ENCODE measurements at regions of chr19 and their contacts with region 1.

Region 1: GRCh38 chr19:9597027-9597426 is 12.7 kb upstream of the ZNF121 start:
- DNase-seq: no peak
- H3K4me3 Mint-ChIP-seq: no peak overlapping the region
- H3K27ac Mint-ChIP-seq: peak overlapping the region; percentile 63
- H3K4me1 Mint-ChIP-seq: peaks cover 3% of the 10 kb centered on the region
- H3K27me3 Mint-ChIP-seq: peaks cover 4% of the 10 kb centered on the region

Region 2: DNA sequence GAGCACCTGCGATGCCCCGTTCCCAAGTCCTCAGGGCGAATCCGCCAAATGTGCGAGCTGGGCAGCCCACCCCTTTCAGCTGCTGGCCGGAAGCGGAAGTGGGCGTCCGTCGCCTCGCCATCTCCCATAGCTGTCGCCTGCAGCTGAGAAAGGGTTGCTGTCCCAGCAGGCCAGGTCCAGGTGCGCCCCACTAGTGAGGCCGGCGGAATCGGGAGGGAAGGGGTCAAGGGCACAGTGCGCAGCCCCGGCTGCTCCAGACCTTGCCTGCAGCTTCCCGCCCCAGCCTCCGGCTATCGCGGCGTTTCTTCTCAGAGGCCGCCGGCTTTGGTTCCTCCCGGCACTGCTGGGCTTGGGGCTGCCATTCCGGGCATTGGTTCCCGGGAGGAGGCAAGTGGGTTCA is 234.1 kb before region 1 on chr19 and contains the start of gene ZNF177:
- CTCF ChIA-PET with region 1: no interaction called
- intact Hi-C with region 1: no loop called
- DNase-seq: peak; percentile 6
- H3K4me3 Mint-ChIP-seq: no peak within 1 kb of the TSS
- H3K27ac Mint-ChIP-seq: peak within 1 kb of the TSS; percentile 2
- H3K4me1 Mint-ChIP-seq: no peaks in the 10 kb centered on the region
- H3K27me3 Mint-ChIP-seq: peaks cover 10% of the 10 kb centered on the region
- total RNA-seq, gene ZNF177: 0.64 to 0.91 TPM

Region 3: GRCh38 chr19:9528757-9529336 is 68.2 kb before region 1 on chr19:
- CTCF ChIA-PET with region 1: no interaction called
- intact Hi-C with region 1: no loop called
- DNase-seq: no peak
- H3K4me3 Mint-ChIP-seq: no peak overlapping the region
- H3K27ac Mint-ChIP-seq: no peak overlapping the region
- H3K4me1 Mint-ChIP-seq: no peaks in the 10 kb centered on the region
- H3K27me3 Mint-ChIP-seq: no peaks in the 10 kb centered on the region

Region 4: DNA sequence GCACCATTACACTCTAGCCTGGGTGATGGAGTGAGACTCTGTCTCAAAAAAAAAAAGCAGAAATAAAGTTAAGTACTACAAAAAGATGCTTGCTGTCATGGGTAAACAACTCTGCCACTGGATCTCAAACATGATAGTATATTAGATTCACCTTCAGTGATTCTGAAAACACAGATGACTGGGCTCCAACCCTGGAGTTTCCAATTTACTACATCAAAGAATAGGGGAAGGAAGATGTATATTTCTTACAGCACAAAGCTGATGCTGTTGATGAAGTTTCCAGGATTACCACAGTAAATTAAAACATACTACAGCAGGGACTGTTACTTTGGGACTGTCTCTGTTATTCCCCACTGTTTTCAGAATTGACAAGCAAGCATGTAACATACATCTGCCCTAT is 18.8 kb after region 1 on chr19:
- CTCF ChIA-PET with region 1: interaction called, 3 read pairs
- intact Hi-C with region 1: loop called (anchors 1 kb)
- DNase-seq: peak; percentile 26
- H3K4me3 Mint-ChIP-seq: no peak overlapping the region
- H3K27ac Mint-ChIP-seq: peak overlapping the region; percentile 83
- H3K4me1 Mint-ChIP-seq: peaks cover 15% of the 10 kb centered on the region
- H3K27me3 Mint-ChIP-seq: no peaks in the 10 kb centered on the region